ENCODE measurements at regions of chr7 and their contacts with region 1.

Region 1: DNA sequence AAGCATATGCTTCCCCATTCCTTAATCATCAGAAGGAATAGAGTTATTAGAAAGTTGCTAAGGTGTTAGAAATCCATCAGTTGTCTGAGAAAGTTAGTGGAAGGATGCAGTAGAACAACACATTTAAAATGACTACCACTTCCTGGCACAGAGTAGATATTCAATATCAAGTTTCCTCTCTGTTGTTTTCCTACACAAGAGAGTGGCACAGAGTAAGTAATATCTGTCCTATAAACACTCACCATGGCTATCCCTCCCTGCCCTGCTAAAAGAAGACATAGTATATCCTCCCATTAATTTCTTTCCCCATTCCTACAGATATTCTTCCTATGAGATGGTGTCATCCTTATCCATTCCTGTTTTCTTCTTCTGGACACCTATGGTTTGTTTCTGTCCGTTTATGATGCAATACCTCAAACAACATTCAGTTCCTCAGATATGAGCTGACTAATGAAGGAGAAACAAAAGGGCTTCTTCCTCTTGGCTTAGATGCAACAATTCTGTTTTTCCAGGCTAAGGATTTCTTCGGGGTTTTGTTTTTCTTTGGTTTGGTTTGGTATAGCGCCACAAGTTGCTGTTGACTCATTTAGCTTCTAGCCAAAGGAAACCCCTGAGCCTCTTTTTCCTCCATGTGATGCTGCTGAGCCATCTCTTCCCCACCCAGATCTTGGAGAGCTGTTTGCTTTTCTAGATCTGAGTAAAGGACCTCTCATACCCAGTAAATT is 32.9 kb upstream of the BPGM start:
- DNase-seq: no peak
- H3K4me3 Mint-ChIP-seq: no peak overlapping the region
- H3K27ac Mint-ChIP-seq: peak overlapping the region; percentile 74
- H3K4me1 Mint-ChIP-seq: peaks cover 14% of the 10 kb centered on the region
- H3K27me3 Mint-ChIP-seq: peaks cover 25% of the 10 kb centered on the region

Region 2: GRCh38 chr7:134640842-134641715 is 27.3 kb after region 1 on chr7:
- intact Hi-C with region 1: loop called (anchors 1 kb)
- DNase-seq: no peak
- H3K4me3 Mint-ChIP-seq: no peak overlapping the region
- H3K27ac Mint-ChIP-seq: peak overlapping the region; percentile 88
- H3K4me1 Mint-ChIP-seq: peaks cover 36% of the 10 kb centered on the region
- H3K27me3 Mint-ChIP-seq: no peaks in the 10 kb centered on the region

Region 3: GRCh38 chr7:134737566-134738345 is 124.0 kb after region 1 on chr7:
- intact Hi-C with region 1: loop called (anchors 1 kb)
- DNase-seq: peak; percentile 28
- H3K4me3 Mint-ChIP-seq: no peak overlapping the region
- H3K27ac Mint-ChIP-seq: peak overlapping the region; percentile 90
- H3K4me1 Mint-ChIP-seq: peaks cover 55% of the 10 kb centered on the region
- H3K27me3 Mint-ChIP-seq: no peaks in the 10 kb centered on the region

Measured in activated T-helper 2 cell treated with anti-CD3 and anti-CD28 coated beads, Interferon-gamma antibody, Interleukin-2, Interleukin-4, amounts not matched to agents 10 μg/mL and 5 μg/mL and 100 μg/mL, durations not matched to agents 14 hours and 24 hours and 36 hours (primary cell).